AG04449 (cell line): ENCODE measurements at regions of chr2 and their contacts with region 1.

Region 1: GRCh38 chr2:182650704-182651103 is 65.4 kb upstream of the DNAJC10 start:
- DNase-seq: peak; percentile 34
- H3K4me3 ChIP-seq: no peak overlapping the region
- CTCF ChIP-seq: no peak

Region 2: GRCh38 chr2:182179176-182179575 is 471.5 kb before region 1 on chr2:
- CTCF ChIA-PET with region 1: interaction called, 135 read pairs
- POLR2A ChIA-PET with region 1: no interaction called
- DNase-seq: no peak
- H3K4me3 ChIP-seq: no peak overlapping the region
- CTCF ChIP-seq: no peak

Region 3: GRCh38 chr2:182226807-182227206 is 423.9 kb before region 1 on chr2:
- CTCF ChIA-PET with region 1: interaction called, 10 read pairs
- POLR2A ChIA-PET with region 1: no interaction called
- DNase-seq: no peak
- H3K4me3 ChIP-seq: no peak overlapping the region
- CTCF ChIP-seq: no peak

Region 4: DNA sequence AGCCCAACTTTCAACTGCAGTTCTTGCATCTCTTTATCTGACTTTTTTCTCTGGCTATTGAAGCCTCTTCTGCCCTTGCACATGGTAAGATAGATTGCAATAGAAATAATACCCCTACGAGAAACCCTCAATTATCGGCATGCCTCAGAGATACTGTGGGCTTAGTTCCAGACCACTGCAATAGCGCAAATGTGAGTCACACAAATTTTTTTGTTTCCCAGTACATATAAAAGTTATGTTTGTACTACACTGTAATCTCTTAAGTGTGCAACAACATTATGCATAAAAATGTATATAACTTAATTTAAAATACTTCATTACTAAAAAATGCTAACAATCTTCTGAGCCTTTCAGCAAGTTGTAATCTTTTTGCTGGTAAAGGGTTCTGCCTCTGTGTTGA is 348.5 kb before region 1 on chr2:
- CTCF ChIA-PET with region 1: interaction called, 17 read pairs
- POLR2A ChIA-PET with region 1: no interaction called
- DNase-seq: peak; percentile 79
- H3K4me3 ChIP-seq: no peak overlapping the region
- CTCF ChIP-seq: no peak

Region 5: GRCh38 chr2:182463760-182464159 is 186.9 kb before region 1 on chr2:
- CTCF ChIA-PET with region 1: no interaction called
- POLR2A ChIA-PET with region 1: no interaction called
- DNase-seq: no peak
- H3K4me3 ChIP-seq: no peak overlapping the region
- CTCF ChIP-seq: no peak

Region 6: GRCh38 chr2:182636695-182637094 is 14.0 kb before region 1 on chr2:
- CTCF ChIA-PET with region 1: interaction called, 12 read pairs
- POLR2A ChIA-PET with region 1: no interaction called
- DNase-seq: no peak
- H3K4me3 ChIP-seq: no peak overlapping the region
- CTCF ChIP-seq: no peak

Region 7: DNA sequence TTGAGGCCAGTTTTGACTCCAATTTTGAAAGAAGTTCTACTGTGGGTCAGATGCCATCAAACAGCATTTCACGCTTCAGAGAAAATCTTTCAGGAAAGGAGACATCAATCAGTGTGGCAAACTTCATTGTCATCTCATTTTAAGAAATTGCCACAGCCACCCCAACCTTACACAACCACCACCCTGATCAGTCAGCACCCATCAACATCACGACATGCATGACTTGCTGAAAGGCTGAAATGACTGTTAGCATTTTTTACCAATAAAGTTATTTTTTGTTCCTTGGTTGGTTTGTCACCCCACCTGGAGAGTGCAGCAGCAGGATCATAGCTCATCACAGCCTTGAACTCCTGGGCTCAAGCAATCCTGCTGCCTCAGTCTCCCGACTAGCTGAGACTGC is 75.8 kb after region 1 on chr2:
- CTCF ChIA-PET with region 1: no interaction called
- POLR2A ChIA-PET with region 1: no interaction called
- DNase-seq: no peak
- H3K4me3 ChIP-seq: no peak overlapping the region
- CTCF ChIP-seq: no peak

Region 8: GRCh38 chr2:183564726-183565125 is 914.0 kb after region 1 on chr2:
- CTCF ChIA-PET with region 1: no interaction called
- POLR2A ChIA-PET with region 1: no interaction called
- DNase-seq: no peak
- H3K4me3 ChIP-seq: no peak overlapping the region
- CTCF ChIP-seq: no peak